HepG2 (cell line): ENCODE measurements at regions of chr14 and their contacts with region 1.

Region 1: GRCh38 chr14:60488175-60488574 is 2.3 kb upstream of the C14orf39 start:
- DNase-seq: no peak
- ATAC-seq: no peak
- H3K4me3 ChIP-seq: no peak overlapping the region
- H3K27ac ChIP-seq: no peak overlapping the region
- H3K4me1 ChIP-seq: no peaks in the 10 kb centered on the region
- H3K27me3 ChIP-seq: 0 out of 5 replicates have a peak, but pooled peaks cover 0 to 2% of the 10 kb centered on the region in 2 experiments
- CTCF ChIP-seq: no peak
- EP300 ChIP-seq: no peak
- POLR2A ChIP-seq: no peak
- RAD21 ChIP-seq: no peak

Region 2: GRCh38 chr14:60349663-60350365 is 138.4 kb before region 1 on chr14:
- CTCF ChIA-PET with region 1: interaction called, 3 read pairs
- POLR2A ChIA-PET with region 1: no interaction called
- in situ Hi-C with region 1: no loop called
- intact Hi-C with region 1: loop called (anchors 1 kb)
- DNase-seq: peak; percentile 21
- ATAC-seq: peak; percentile 83
- H3K4me3 ChIP-seq: no peak overlapping the region
- H3K27ac ChIP-seq: no peak overlapping the region
- H3K4me1 ChIP-seq: no peaks in the 10 kb centered on the region
- H3K27me3 ChIP-seq: no peaks in the 10 kb centered on the region
- CTCF ChIP-seq: peak; percentile 67
- EP300 ChIP-seq: no peak
- POLR2A ChIP-seq: no peak
- RAD21 ChIP-seq: no peak